ENCODE measurements at regions of chr1 and their contacts with region 1.

Region 1: GRCh38 chr1:223133824-223134435 is 9.1 kb downstream of the TLR5 start:
- DNase-seq: peak; percentile 84
- H3K4me3 ChIP-seq: peak overlapping the region; percentile 59
- H3K27ac ChIP-seq: peak overlapping the region; percentile 66
- H3K4me1 ChIP-seq: peaks cover 46% of the 10 kb centered on the region
- H3K27me3 ChIP-seq: peaks cover 22% of the 10 kb centered on the region
- CTCF ChIP-seq: peak; percentile 99

Region 2: DNA sequence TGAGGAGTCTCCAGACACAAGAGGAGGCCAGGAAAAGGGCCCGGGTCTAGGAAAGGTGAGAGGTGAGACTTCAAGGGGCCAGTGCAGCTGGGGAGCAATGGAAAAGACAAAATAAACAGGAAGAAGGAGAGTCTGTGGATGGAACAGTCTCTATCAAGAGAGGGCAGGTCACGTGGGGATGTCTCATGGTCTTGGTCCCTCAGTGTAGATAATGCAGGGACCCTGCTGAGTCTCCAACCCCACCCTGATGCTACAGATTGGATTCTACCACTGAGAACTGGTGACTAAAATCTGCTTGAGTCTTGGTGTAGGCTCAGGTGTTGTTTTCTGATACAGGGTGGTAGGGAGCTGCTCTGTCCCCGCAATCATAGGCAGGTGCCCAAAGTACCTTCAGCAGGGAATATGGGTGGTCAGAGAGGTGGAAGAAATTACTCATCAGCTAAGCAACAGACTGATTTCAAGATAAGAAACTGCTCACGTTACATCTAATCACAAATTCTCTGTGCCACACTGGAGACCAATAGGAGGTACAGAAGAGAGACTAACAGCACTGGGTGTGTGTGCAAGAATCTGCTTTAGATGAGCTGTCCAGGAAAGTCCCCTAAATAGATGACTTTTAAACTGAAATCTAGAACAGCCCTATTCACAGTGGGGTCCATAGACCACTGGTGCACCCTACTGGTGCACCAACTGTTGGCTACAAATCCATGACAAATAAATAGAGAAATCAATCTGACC is 110.6 kb after region 1 on chr1:
- intact Hi-C with region 1: loop called (anchors 5 kb)
- DNase-seq: no peak
- H3K4me3 ChIP-seq: no peak overlapping the region
- H3K27ac ChIP-seq: no peak overlapping the region
- H3K4me1 ChIP-seq: no peaks in the 10 kb centered on the region
- H3K27me3 ChIP-seq: no peaks in the 10 kb centered on the region
- CTCF ChIP-seq: peak; percentile 59

Region 3: GRCh38 chr1:223455470-223455869 is 321.5 kb after region 1 on chr1:
- intact Hi-C with region 1: no loop called
- DNase-seq: no peak
- H3K4me3 ChIP-seq: no peak overlapping the region
- H3K27ac ChIP-seq: no peak overlapping the region
- H3K4me1 ChIP-seq: no peaks in the 10 kb centered on the region
- H3K27me3 ChIP-seq: no peaks in the 10 kb centered on the region
- CTCF ChIP-seq: no peak